Endothelial cell of umbilical vein (primary cell): ENCODE measurements at regions of chr7 and their contacts with region 1.

Region 1: DNA sequence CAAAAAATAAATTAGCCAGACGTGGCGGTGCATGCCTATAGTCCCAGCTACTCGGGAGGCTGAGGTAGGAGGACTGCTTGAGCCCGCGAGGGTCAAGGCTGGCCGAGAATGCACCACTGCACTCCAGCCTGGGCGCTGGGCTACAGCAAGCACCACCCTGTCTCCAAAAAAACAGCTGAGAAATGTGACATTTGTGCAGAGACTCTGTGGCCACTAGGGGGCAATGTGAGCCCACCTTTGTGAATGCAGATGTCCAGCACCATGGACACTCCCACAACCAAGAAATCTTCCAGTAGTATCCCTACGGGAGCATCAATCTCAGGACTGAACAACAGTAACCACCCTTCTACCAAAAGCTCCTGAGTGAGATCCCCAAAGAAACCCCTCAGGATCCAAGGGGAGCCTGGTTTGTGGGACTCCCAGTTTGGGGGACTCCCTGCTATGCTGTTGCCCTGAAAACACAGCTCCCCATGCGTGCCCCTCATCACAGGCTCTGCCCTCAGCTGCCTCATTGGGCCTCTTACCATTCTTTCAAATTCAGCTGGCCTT is 6.2 kb upstream of the AHCYL2 start:
- DNase-seq: peak; percentile 80
- H3K4me3 ChIP-seq: no peak overlapping the region
- H3K27ac ChIP-seq: no peak overlapping the region
- H3K4me1 ChIP-seq: peaks cover 7% of the 10 kb centered on the region
- H3K27me3 ChIP-seq: peaks cover 0 to 2% of the 10 kb centered on the region in 2 experiments
- CTCF ChIP-seq: peak; percentile 79 to 84
- POLR2A ChIP-seq: no peak

Region 2: GRCh38 chr7:129271500-129272355 is 53.1 kb after region 1 on chr7:
- CTCF ChIA-PET with region 1: interaction called, 65 read pairs
- POLR2A ChIA-PET with region 1: no interaction called
- dilution Hi-C with region 1: no loop called
- intact Hi-C with region 1: loop called (anchors 1 kb)
- DNase-seq: peak; percentile 69
- H3K4me3 ChIP-seq: no peak overlapping the region
- H3K27ac ChIP-seq: no peak overlapping the region
- H3K4me1 ChIP-seq: no peaks in the 10 kb centered on the region
- H3K27me3 ChIP-seq: no peaks in the 10 kb centered on the region
- CTCF ChIP-seq: peak; percentile 56 to 62
- POLR2A ChIP-seq: no peak

Region 3: DNA sequence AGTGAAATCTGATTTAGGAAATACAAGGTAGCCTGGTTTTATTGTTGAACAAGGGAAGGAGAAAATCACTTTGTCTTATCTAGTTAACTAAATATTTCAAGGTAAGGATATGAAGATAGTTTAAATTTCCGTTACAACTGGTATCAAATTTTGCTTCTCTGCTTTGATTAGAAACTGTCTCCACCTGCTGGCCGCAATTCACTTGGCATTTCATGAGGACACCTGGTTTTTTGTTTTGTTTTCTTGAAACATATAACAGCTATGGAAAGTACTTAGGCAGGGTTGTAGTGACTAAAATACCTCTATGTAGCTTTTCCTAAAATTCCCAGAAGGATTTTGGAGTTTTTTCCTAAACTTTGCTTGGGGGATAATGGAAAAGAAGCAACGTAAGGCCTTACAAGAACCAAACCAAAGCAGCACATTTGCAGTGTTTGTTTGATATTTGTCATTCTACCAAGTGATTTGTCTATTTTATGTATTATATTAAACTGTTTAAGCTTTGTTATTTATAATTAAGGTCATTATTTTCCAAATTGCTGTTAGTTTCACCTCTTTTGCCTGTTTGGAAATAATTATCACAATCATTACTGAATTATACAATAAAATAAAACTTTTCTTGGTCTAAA is 79.8 kb after region 1 on chr7:
- CTCF ChIA-PET with region 1: interaction called, 235 read pairs
- POLR2A ChIA-PET with region 1: no interaction called
- dilution Hi-C with region 1: no loop called
- intact Hi-C with region 1: loop called (anchors 1 kb)
- DNase-seq: peak; percentile 66
- H3K4me3 ChIP-seq: no peak overlapping the region
- H3K27ac ChIP-seq: no peak overlapping the region
- H3K4me1 ChIP-seq: no peaks in the 10 kb centered on the region
- H3K27me3 ChIP-seq: no peaks in the 10 kb centered on the region
- CTCF ChIP-seq: peak; percentile 54 to 56
- POLR2A ChIP-seq: no peak

Region 4: GRCh38 chr7:129343099-129343700 is 124.6 kb after region 1 on chr7:
- CTCF ChIA-PET with region 1: interaction called, 65 read pairs
- POLR2A ChIA-PET with region 1: no interaction called
- dilution Hi-C with region 1: no loop called
- intact Hi-C with region 1: loop called (anchors 1 kb)
- DNase-seq: peak; percentile 68
- H3K4me3 ChIP-seq: no peak overlapping the region
- H3K27ac ChIP-seq: no peak overlapping the region
- H3K4me1 ChIP-seq: no peaks in the 10 kb centered on the region
- H3K27me3 ChIP-seq: no peaks in the 10 kb centered on the region
- CTCF ChIP-seq: peak; percentile 48 to 54
- POLR2A ChIP-seq: no peak

Region 5: DNA sequence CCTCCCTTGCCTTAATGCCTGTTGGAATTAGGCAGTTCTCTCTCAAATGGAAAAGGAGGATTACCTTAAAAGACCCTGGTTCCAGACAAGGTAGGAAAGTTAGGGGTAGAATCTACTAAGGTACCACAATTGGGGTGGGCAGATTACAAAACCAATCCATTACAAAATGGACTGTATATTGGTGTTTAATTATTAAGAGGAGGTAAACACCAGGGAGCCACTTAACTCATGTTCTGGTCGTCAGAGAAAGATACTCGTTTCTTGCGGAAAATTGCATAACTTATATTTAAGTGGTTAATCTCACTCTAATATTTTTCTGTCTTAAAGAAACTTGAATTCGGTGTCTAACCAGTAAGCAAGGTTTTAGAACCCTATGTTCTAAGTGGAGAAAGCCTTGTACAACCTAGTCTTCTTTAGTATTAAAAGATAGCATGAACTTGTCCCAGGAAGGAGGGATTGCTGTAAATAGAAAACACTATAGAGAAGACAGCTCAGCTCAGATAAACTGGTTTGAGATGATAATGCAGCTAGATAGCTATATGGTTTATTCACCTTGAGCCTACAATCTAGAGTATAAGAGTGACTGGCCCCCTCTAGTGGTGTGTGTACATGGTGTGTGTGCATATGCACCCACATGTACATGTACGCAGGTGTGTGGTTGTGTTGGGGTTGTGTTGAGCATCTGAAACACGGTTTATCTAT is 157.6 kb after region 1 on chr7:
- CTCF ChIA-PET with region 1: interaction called, 20 read pairs
- POLR2A ChIA-PET with region 1: no interaction called
- dilution Hi-C with region 1: no loop called
- intact Hi-C with region 1: loop called (anchors 1 kb)
- DNase-seq: peak; percentile 39
- H3K4me3 ChIP-seq: no peak overlapping the region
- H3K27ac ChIP-seq: no peak overlapping the region
- H3K4me1 ChIP-seq: peaks cover 10% of the 10 kb centered on the region
- H3K27me3 ChIP-seq: no peaks in the 10 kb centered on the region
- CTCF ChIP-seq: peak; percentile 38 to 57
- POLR2A ChIP-seq: no peak

Region 6: DNA sequence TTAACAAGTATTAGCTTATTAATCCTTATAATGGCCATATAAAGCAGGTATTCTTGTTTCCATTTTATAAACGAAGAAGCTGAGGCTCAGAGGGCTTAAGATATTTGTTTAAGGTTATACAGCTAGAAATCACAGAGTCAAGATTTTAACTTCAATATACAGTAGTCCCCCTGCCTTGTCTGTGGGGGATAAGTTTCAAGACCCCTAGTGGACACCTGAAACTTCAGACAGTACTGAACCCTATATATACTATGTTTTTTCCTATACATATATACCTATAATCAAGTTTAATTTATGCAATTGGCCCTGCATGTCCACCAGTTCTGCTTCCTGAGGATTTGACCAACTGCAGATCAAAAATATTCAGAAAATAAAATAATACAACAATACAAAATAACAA is 171.2 kb after region 1 on chr7:
- CTCF ChIA-PET with region 1: no interaction called
- POLR2A ChIA-PET with region 1: no interaction called
- dilution Hi-C with region 1: no loop called
- intact Hi-C with region 1: no loop called
- DNase-seq: no peak
- H3K4me3 ChIP-seq: no peak overlapping the region
- H3K27ac ChIP-seq: no peak overlapping the region
- H3K4me1 ChIP-seq: no peaks in the 10 kb centered on the region
- H3K27me3 ChIP-seq: no peaks in the 10 kb centered on the region
- CTCF ChIP-seq: no peak
- POLR2A ChIP-seq: no peak